ENCODE measurements at regions of chr4 and their contacts with region 1.

Region 1: DNA sequence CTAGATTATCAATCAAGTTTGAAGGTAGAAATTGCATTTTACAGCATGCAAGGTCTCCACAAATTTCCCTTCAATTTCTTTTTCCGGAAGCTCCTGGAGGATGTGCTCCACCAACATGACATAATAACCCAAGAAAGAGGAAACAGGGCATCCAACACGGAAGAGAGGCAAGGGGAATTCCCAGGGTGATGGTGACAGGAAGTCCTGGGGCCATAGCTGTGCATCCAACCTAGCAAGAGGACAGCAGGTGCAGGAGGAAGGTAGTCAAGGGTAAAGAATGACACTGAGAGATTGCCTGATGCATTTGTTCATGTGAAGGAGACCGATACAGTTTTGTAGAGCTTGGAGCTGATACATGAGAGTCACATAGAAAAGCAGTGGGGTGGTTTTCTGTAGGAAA is 115.7 kb upstream of the LSM6 start:
- DNase-seq: peak; percentile 84
- ATAC-seq: peak; percentile 86
- H3K4me3 ChIP-seq: no peak overlapping the region
- H3K27ac ChIP-seq: peak overlapping the region; percentile 86
- H3K4me1 ChIP-seq: peaks cover 50% of the 10 kb centered on the region
- H3K27me3 ChIP-seq: no peaks in the 10 kb centered on the region
- CTCF ChIP-seq: no peak
- EP300 ChIP-seq: peak; percentile 31 to 73; a peak in 3 of 4 replicates
- POLR2A ChIP-seq: 0 out of 2 replicates have a peak, but pooled peaks have one; percentile 24
- RAD21 ChIP-seq: peak; percentile 23; the same call in 1 of the 2 replicates

Region 2: DNA sequence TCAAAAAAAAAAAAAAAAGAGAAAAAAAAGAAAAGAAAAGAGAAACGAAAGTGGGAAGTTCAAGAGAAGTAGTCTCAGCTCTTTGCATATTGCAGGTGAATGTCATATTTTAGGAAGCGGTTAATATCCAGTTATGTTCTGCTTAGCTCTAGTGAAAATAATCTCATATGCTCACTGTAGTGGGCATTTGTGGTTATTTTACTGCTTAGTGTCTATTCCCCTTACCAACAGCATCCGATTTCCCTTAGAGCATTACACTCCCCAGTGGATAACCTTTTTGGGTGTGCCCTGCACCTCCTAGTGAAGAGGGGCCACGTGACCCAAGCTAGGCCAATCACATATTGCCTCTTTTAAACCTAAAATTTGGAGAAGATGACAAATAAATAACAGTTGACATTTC is 10.1 kb before region 1 on chr4:
- CTCF ChIA-PET with region 1: interaction called, 7 read pairs
- POLR2A ChIA-PET with region 1: no interaction called
- RAD21 ChIA-PET with region 1: interaction called, 14 read pairs
- SMC1A ChIA-PET with region 1: interaction called, 26 read pairs
- in situ Hi-C with region 1: no loop called
- intact Hi-C with region 1: no loop called
- DNase-seq: peak; percentile 56
- ATAC-seq: peak; percentile 77
- H3K4me3 ChIP-seq: no peak overlapping the region
- H3K27ac ChIP-seq: peak overlapping the region; percentile 38
- H3K4me1 ChIP-seq: peaks cover 31% of the 10 kb centered on the region
- H3K27me3 ChIP-seq: no peaks in the 10 kb centered on the region
- CTCF ChIP-seq: no peak
- EP300 ChIP-seq: peak in 1 of 2 experiments; percentile 15; a peak in 1 of 4 replicates
- POLR2A ChIP-seq: no peak
- RAD21 ChIP-seq: no peak